HepG2 (cell line): ENCODE measurements at regions of chr14 and their contacts with region 1.

Region 1: GRCh38 chr14:30005114-30005808 is 77.6 kb upstream of the PRKD1 start:
- DNase-seq: peak; percentile 62
- ATAC-seq: peak; percentile 98
- H3K4me3 ChIP-seq: no peak overlapping the region
- H3K27ac ChIP-seq: no peak overlapping the region
- H3K4me1 ChIP-seq: no peaks in the 10 kb centered on the region
- H3K27me3 ChIP-seq: no peaks in the 10 kb centered on the region
- CTCF ChIP-seq: peak; percentile 78
- EP300 ChIP-seq: no peak
- POLR2A ChIP-seq: no peak
- RAD21 ChIP-seq: no peak; the same call in 1 of the 2 replicates

Region 2: DNA sequence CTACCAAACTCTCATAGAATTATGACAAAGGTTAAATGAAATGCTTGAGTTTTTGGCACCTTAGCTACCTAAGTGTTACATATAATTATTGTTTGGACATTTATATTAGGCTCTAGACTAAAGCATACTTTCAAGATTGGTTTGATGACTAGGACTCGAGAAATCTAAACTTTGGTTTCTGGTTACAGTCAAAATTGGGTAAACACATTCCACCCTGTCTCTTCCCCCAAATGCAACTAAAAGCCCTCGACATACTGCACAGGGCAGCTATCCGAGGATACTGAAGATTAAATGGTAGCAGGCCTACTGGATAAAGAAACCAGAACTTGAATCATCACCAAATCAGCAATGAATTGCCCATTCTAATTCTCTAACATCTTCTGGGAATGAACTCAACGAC is 446.7 kb before region 1 on chr14:
- CTCF ChIA-PET with region 1: no interaction called
- POLR2A ChIA-PET with region 1: no interaction called
- in situ Hi-C with region 1: loop called (anchors 10 kb)
- intact Hi-C with region 1: no loop called
- DNase-seq: no peak
- ATAC-seq: no peak
- H3K4me3 ChIP-seq: no peak overlapping the region
- H3K27ac ChIP-seq: no peak overlapping the region
- H3K4me1 ChIP-seq: no peaks in the 10 kb centered on the region
- H3K27me3 ChIP-seq: no peaks in the 10 kb centered on the region
- CTCF ChIP-seq: no peak
- EP300 ChIP-seq: no peak
- POLR2A ChIP-seq: no peak
- RAD21 ChIP-seq: no peak

Region 3: DNA sequence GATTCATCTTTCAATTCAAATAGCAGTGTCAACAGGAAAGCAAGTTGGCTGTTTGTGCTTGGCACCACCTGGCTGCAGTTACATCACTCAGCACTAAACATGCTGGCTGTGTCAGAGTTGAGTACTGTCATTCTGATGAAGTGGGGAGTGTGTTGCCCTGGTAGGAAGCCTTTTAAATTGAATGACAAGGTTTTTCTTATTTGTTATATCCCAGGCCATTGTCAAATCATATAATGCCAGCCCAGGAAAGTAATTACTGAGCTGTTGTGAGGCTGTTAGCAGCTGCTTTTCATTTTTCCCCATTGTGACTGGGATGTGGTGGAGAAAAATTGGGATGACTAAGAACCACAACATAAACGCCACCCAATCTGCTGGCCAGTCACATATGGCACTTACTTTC is 28.9 kb after region 1 on chr14:
- CTCF ChIA-PET with region 1: no interaction called
- POLR2A ChIA-PET with region 1: no interaction called
- in situ Hi-C with region 1: no loop called
- intact Hi-C with region 1: no loop called
- DNase-seq: no peak
- ATAC-seq: no peak
- H3K4me3 ChIP-seq: no peak overlapping the region
- H3K27ac ChIP-seq: no peak overlapping the region
- H3K4me1 ChIP-seq: no peaks in the 10 kb centered on the region
- H3K27me3 ChIP-seq: no peaks in the 10 kb centered on the region
- CTCF ChIP-seq: no peak
- EP300 ChIP-seq: no peak
- POLR2A ChIP-seq: no peak
- RAD21 ChIP-seq: no peak